ENCODE measurements at regions of chr7 and their contacts with region 1.

Region 1: DNA sequence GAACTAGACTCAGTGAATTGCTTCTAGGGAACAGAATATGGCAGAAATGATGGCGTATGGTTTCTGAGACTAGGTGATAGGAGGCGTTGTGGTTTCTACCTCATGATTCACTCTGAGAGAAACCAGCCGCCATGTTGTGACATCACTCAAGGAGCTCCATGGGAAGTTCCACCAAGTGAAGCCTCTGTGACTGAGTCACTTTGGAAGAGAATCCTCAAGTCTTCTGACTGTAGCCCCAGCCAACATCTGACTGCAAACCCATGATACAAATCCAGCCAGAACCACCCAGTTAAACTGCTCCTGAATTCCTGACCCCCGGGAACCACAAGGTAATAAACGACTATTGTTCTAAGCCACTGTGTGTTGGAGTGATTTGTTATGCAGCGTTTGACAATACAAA is 91.0 kb upstream of the CARD11 start:
- DNase-seq: no peak
- ATAC-seq: no peak
- H3K4me3 Mint-ChIP-seq: no peak overlapping the region
- H3K27ac Mint-ChIP-seq: no peak overlapping the region
- H3K4me1 Mint-ChIP-seq: no peaks in the 10 kb centered on the region
- H3K27me3 Mint-ChIP-seq: peaks cover 5% of the 10 kb centered on the region
- CTCF ChIP-seq: no peak

Region 2: GRCh38 chr7:2632733-2633537 is 501.8 kb before region 1 on chr7:
- CTCF ChIA-PET with region 1: no interaction called
- POLR2A ChIA-PET with region 1: no interaction called
- intact Hi-C with region 1: no loop called
- DNase-seq: peak; percentile 45
- ATAC-seq: no peak
- H3K4me3 Mint-ChIP-seq: peak overlapping the region; percentile 87
- H3K27ac Mint-ChIP-seq: peak overlapping the region; percentile 70
- H3K4me1 Mint-ChIP-seq: peaks cover 42% of the 10 kb centered on the region
- H3K27me3 Mint-ChIP-seq: peaks cover under 1% of the 10 kb centered on the region
- CTCF ChIP-seq: no peak

Region 3: GRCh38 chr7:3078514-3078913 is 56.2 kb before region 1 on chr7:
- CTCF ChIA-PET with region 1: no interaction called
- POLR2A ChIA-PET with region 1: no interaction called
- intact Hi-C with region 1: no loop called
- DNase-seq: no peak
- ATAC-seq: peak; percentile 67
- H3K4me3 Mint-ChIP-seq: no peak overlapping the region
- H3K27ac Mint-ChIP-seq: peak overlapping the region; percentile 2
- H3K4me1 Mint-ChIP-seq: peaks cover 23% of the 10 kb centered on the region
- H3K27me3 Mint-ChIP-seq: no peaks in the 10 kb centered on the region
- CTCF ChIP-seq: no peak

Region 4: GRCh38 chr7:3092468-3092867 is 42.2 kb before region 1 on chr7:
- CTCF ChIA-PET with region 1: no interaction called
- POLR2A ChIA-PET with region 1: no interaction called
- intact Hi-C with region 1: loop called (anchors 5 kb)
- DNase-seq: peak; percentile 54
- ATAC-seq: peak; percentile 84
- H3K4me3 Mint-ChIP-seq: peak overlapping the region; percentile 15
- H3K27ac Mint-ChIP-seq: peak overlapping the region; percentile 83
- H3K4me1 Mint-ChIP-seq: peaks cover 52% of the 10 kb centered on the region
- H3K27me3 Mint-ChIP-seq: no peaks in the 10 kb centered on the region
- CTCF ChIP-seq: no peak

Measured in activated B cell treated with CpG ODN at 0.5 μM for 24 hours (primary cell).